MCF 10A (cell line): ENCODE measurements at regions of chr7 and their contacts with region 1.

Region 1: GRCh38 chr7:12458520-12459131 is 55.0 kb upstream of the VWDE start:
- DNase-seq: peak; percentile 62
- H3K4me3 Mint-ChIP-seq: no peak overlapping the region
- H3K27ac Mint-ChIP-seq: no peak overlapping the region
- H3K4me1 Mint-ChIP-seq: no peaks in the 10 kb centered on the region
- H3K27me3 Mint-ChIP-seq: no peaks in the 10 kb centered on the region
- CTCF ChIP-seq: peak; percentile 72

Region 2: GRCh38 chr7:12423355-12423994 is 35.2 kb before region 1 on chr7:
- CTCF ChIA-PET with region 1: interaction called, 18 read pairs
- POLR2A ChIA-PET with region 1: no interaction called
- intact Hi-C with region 1: no loop called
- DNase-seq: peak; percentile 64
- H3K4me3 Mint-ChIP-seq: peak overlapping the region; percentile 0
- H3K27ac Mint-ChIP-seq: peak overlapping the region; percentile 32
- H3K4me1 Mint-ChIP-seq: peaks cover 17% of the 10 kb centered on the region
- H3K27me3 Mint-ChIP-seq: no peaks in the 10 kb centered on the region
- CTCF ChIP-seq: no peak

Region 3: DNA sequence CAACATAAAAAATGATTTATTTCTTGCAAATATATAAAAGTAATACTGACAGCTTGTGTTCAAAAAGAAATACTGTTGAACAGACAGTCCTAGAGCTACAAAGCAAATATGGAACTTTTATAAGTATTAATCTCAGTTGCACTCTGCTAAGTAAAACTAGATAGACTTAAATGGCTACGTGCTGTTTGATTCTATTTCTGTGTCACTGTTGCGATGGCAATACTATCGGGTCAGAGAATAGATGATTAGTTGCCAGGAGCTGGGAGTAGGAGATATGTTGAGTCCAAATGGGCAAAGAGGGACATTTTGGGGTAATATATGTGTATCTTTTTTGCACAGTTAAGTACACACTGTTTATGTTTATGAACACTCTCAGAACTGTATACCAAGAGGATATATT is 13.8 kb before region 1 on chr7:
- CTCF ChIA-PET with region 1: interaction called, 44 read pairs
- POLR2A ChIA-PET with region 1: no interaction called
- intact Hi-C with region 1: no loop called
- DNase-seq: no peak
- H3K4me3 Mint-ChIP-seq: no peak overlapping the region
- H3K27ac Mint-ChIP-seq: no peak overlapping the region
- H3K4me1 Mint-ChIP-seq: no peaks in the 10 kb centered on the region
- H3K27me3 Mint-ChIP-seq: peaks cover 17% of the 10 kb centered on the region
- CTCF ChIP-seq: no peak

Region 4: DNA sequence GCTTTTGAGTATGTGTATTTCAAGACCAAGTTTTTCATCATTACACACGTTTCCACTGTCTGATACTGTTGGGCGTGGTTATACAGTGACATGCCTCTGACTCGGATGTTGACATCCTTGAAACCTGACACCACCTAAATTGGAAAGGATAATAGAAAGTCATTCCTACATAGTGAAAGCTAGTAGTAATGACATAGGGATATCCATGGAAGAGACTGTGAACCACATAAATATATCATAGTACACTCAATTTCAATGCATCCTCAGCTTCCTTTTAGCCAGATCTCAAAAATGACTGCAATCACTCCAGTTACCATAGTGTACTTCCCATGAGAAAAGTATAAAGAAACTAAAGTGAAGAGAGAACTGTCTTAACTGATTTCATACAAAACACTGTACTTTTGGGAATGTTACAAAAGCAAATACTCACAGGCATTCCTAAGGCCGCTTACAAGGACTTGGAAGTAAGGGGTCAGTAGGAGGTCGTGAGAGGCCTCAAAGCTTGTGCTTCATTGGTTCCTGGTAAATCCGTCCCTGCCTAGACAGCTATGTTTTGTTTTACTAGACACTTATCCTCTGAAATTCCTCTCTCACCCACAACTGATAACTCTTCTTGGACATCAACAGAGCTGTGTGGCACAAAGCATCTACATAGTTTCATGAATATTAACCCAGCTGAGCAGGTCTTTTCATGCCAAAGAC is 16.9 kb after region 1 on chr7:
- CTCF ChIA-PET with region 1: interaction called, 46 read pairs
- POLR2A ChIA-PET with region 1: no interaction called
- intact Hi-C with region 1: no loop called
- DNase-seq: peak; percentile 61
- H3K4me3 Mint-ChIP-seq: no peak overlapping the region
- H3K27ac Mint-ChIP-seq: no peak overlapping the region
- H3K4me1 Mint-ChIP-seq: no peaks in the 10 kb centered on the region
- H3K27me3 Mint-ChIP-seq: no peaks in the 10 kb centered on the region
- CTCF ChIP-seq: no peak

Region 5: DNA sequence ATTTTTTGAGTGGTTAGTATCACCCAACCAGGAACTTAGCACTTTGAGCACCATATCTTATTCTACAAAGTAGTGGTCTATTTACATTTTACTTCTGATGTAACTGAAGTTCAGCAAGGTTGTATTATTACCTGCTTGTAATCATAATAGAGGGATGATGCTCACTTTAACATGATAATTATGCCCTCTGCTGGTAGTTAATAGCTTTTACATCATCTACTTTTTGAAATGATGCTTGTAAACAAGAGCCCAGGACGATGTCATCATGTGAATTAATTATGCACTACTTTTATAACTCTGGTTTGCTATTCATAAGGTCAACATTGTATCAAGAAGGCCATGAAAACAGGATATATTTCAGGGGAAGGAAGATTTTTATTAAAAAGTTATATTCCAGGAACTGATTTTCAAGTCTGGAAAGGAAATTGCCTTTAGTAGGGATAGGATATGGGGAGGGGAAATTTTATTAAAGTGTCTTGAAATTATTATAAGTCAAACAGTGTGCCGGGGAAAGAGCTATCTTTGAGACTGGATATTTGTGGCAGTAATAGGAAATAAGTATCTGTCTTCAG is 31.6 kb after region 1 on chr7:
- CTCF ChIA-PET with region 1: interaction called, 125 read pairs
- POLR2A ChIA-PET with region 1: interaction called, 10 read pairs
- intact Hi-C with region 1: loop called (anchors 1 kb)
- DNase-seq: peak; percentile 35
- H3K4me3 Mint-ChIP-seq: no peak overlapping the region
- H3K27ac Mint-ChIP-seq: no peak overlapping the region
- H3K4me1 Mint-ChIP-seq: no peaks in the 10 kb centered on the region
- H3K27me3 Mint-ChIP-seq: peaks cover 17% of the 10 kb centered on the region
- CTCF ChIP-seq: peak; percentile 42